CD8-positive, alpha-beta T cell (primary cell): ENCODE measurements at regions of chr9 and their contacts with region 1.

Region 1: DNA sequence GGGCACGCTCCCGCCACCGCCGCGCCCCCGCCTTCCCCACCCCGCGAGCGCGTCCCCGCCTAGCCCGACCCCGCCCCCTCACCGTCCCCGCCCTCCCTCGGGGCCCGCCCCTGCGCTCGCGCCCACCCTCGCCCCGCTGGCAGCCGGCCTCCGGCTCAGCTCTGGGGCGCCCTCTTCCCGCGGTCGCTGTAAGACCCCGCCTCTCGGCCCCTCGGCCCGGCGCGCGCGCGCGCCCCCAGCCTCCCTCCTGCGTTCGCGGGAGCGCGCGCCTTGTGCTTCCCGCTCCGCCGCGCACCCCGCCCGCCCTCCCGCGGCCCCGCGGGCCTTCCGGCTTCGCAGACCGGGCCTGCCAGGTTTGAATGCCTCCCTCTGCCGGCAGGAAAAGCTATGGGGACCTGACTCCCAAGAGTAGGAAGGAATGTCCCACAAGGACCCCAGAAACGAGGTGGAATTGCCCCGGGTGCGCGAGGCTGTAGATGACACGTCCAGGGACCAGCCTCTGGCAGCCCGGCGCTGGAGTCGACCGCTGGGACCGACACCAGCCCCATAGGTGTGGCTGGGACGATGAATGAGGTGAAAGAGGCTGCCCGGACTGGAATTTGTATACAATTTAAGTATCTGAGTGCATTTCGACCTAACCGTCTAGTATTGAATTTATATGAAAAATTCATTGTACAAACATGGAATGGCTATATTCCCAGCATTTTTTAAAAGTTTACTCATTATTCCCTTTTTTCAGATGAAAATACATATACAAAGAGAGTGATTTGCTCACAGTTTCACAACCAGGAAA is 416 bp upstream of the PTBP3 start:
- DNase-seq: peak; percentile 89 to 98 (median 94)
- ATAC-seq: peak; percentile 83
- H3K4me3 ChIP-seq: peak overlapping the region; percentile 87 to 99
- H3K4me3 Mint-ChIP-seq: peak overlapping the region; percentile 79
- H3K27ac ChIP-seq: peak overlapping the region; percentile 88 to 93
- H3K27ac Mint-ChIP-seq: peak overlapping the region; percentile 92
- H3K4me1 ChIP-seq: peaks cover 30% of the 10 kb centered on the region
- H3K4me1 Mint-ChIP-seq: peaks cover 38% of the 10 kb centered on the region
- H3K27me3 ChIP-seq: no peaks in the 10 kb centered on the region
- H3K27me3 Mint-ChIP-seq: no peaks in the 10 kb centered on the region
- CTCF ChIP-seq: peak; percentile 20

Region 2: GRCh38 chr9:111661150-111661801 is 672.6 kb before region 1 on chr9 and contains the start of gene GNG10:
- CTCF ChIA-PET with region 1: interaction called, 4 read pairs
- POLR2A ChIA-PET with region 1: no interaction called
- intact Hi-C with region 1: loop called in 1 of 2 experiments (anchors 2 kb)
- DNase-seq: peak; percentile 48 to 82 (median 66)
- ATAC-seq: peak; percentile 95
- H3K4me3 ChIP-seq: peak within 1 kb of the TSS; percentile 70 to 95
- H3K4me3 Mint-ChIP-seq: peak within 1 kb of the TSS; percentile 95
- H3K27ac ChIP-seq: peak within 1 kb of the TSS; percentile 55 to 57
- H3K27ac Mint-ChIP-seq: peak within 1 kb of the TSS; percentile 92
- H3K4me1 ChIP-seq: peaks cover 24% of the 10 kb centered on the region
- H3K4me1 Mint-ChIP-seq: peaks cover 40% of the 10 kb centered on the region
- H3K27me3 ChIP-seq: no peaks in the 10 kb centered on the region
- H3K27me3 Mint-ChIP-seq: no peaks in the 10 kb centered on the region
- CTCF ChIP-seq: no peak
- total RNA-seq, gene GNG10: 1.6 to 2.6 TPM

Region 3: DNA sequence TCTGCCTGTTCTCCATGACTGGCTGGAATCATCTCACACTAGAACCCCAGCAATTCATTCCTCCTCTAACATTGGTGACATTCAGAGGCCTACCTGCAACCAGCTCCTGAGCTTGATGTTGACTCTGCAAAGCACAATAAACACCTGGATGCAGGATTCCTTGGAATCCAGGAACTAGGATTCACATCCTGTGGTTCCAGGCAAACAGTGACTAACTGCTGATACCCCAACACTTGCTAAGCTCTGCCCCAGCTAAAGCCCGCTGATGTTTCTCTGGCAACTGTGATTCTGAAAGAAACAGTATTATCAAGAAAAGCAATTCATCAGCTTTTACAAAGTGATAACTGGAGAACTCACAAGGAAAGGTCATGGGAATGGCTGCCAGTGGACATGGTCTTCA is 187.9 kb before region 1 on chr9:
- CTCF ChIA-PET with region 1: no interaction called
- POLR2A ChIA-PET with region 1: no interaction called
- intact Hi-C with region 1: no loop called
- DNase-seq: no peak
- ATAC-seq: no peak
- H3K4me3 ChIP-seq: no peak overlapping the region
- H3K4me3 Mint-ChIP-seq: no peak overlapping the region
- H3K27ac ChIP-seq: no peak overlapping the region
- H3K27ac Mint-ChIP-seq: no peak overlapping the region
- H3K4me1 ChIP-seq: no peaks in the 10 kb centered on the region
- H3K4me1 Mint-ChIP-seq: no peaks in the 10 kb centered on the region
- H3K27me3 ChIP-seq: no peaks in the 10 kb centered on the region
- H3K27me3 Mint-ChIP-seq: no peaks in the 10 kb centered on the region
- CTCF ChIP-seq: no peak

Region 4: GRCh38 chr9:112174218-112174964 is 159.4 kb before region 1 on chr9:
- CTCF ChIA-PET with region 1: interaction called, 3 read pairs
- POLR2A ChIA-PET with region 1: interaction called, 15 read pairs
- intact Hi-C with region 1: loop called (anchors 1 to 2 kb)
- DNase-seq: peak; percentile 45 to 87 (median 74)
- ATAC-seq: peak; percentile 70
- H3K4me3 ChIP-seq: peak overlapping the region; percentile 43 to 73
- H3K4me3 Mint-ChIP-seq: peak overlapping the region; percentile 91
- H3K27ac ChIP-seq: peak overlapping the region; percentile 35 to 56
- H3K27ac Mint-ChIP-seq: peak overlapping the region; percentile 87
- H3K4me1 ChIP-seq: peaks cover 46% of the 10 kb centered on the region
- H3K4me1 Mint-ChIP-seq: peaks cover 73% of the 10 kb centered on the region
- H3K27me3 ChIP-seq: no peaks in the 10 kb centered on the region
- H3K27me3 Mint-ChIP-seq: no peaks in the 10 kb centered on the region
- CTCF ChIP-seq: no peak

Region 5: GRCh38 chr9:112299514-112299913 is 34.3 kb before region 1 on chr9:
- CTCF ChIA-PET with region 1: no interaction called
- POLR2A ChIA-PET with region 1: no interaction called
- intact Hi-C with region 1: loop called in 1 of 2 experiments (anchors 5 kb)
- DNase-seq: no peak
- ATAC-seq: no peak
- H3K4me3 ChIP-seq: no peak overlapping the region
- H3K4me3 Mint-ChIP-seq: no peak overlapping the region
- H3K27ac ChIP-seq: no peak overlapping the region
- H3K27ac Mint-ChIP-seq: peak overlapping the region; percentile 27
- H3K4me1 ChIP-seq: peaks cover 7% of the 10 kb centered on the region
- H3K4me1 Mint-ChIP-seq: peaks cover 58% of the 10 kb centered on the region
- H3K27me3 ChIP-seq: no peaks in the 10 kb centered on the region
- H3K27me3 Mint-ChIP-seq: no peaks in the 10 kb centered on the region
- CTCF ChIP-seq: no peak

Region 6: GRCh38 chr9:112379177-112380101 is 45.6 kb after region 1 on chr9:
- CTCF ChIA-PET with region 1: interaction called, 3 read pairs
- POLR2A ChIA-PET with region 1: interaction called, 10 read pairs
- intact Hi-C with region 1: loop called (anchors 1 kb)
- DNase-seq: peak; percentile 93 to 99 (median 97)
- ATAC-seq: peak; percentile 95
- H3K4me3 ChIP-seq: peak overlapping the region; percentile 81 to 96
- H3K4me3 Mint-ChIP-seq: peak overlapping the region; percentile 99
- H3K27ac ChIP-seq: peak overlapping the region; percentile 77 to 92
- H3K27ac Mint-ChIP-seq: peak overlapping the region; percentile 96
- H3K4me1 ChIP-seq: peaks cover 27% of the 10 kb centered on the region
- H3K4me1 Mint-ChIP-seq: peaks cover 54% of the 10 kb centered on the region
- H3K27me3 ChIP-seq: no peaks in the 10 kb centered on the region
- H3K27me3 Mint-ChIP-seq: no peaks in the 10 kb centered on the region
- CTCF ChIP-seq: no peak

Region 7: DNA sequence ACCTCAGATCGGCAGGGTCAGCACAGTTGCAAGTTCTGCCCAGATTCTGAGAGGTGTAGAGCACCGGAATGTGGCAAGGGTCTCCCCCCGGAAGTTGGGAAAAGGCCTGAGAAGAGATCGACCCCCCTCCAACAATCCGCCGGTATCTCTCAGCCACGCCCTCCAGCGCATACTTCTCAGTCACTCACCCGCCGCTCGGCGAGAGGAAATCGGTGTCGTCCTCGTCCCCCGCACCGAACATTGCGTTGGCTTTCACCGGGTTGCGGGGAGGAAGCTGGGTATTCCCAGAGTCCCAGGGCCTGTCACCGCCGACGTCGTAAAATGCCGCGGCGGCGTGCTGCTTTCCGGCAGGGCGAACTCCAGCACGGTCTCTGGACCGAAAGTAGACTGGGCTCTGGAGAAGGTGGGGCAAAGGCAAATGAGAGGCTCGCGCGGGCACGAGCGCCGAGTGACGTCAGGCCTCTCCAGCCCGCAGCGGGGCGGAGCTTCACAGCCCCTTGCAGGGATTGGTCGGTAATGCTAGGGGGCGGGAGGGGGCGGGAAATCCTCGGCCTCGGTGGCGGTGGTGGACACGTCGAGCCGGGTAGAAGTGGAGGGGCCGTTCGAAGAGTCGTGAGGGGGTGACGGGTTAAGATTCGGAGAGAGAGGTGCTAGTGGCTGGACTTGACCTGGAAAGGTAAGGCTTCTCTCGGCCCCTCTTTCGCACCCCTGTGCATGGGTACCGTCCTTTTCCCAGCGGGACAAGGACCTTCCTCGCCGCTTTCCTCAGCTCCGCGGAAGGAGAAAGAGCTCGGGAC is 887.4 kb after region 1 on chr9 and contains the starts of genes FKBP15 and SLC31A1:
- CTCF ChIA-PET with region 1: no interaction called
- POLR2A ChIA-PET with region 1: no interaction called
- intact Hi-C with region 1: loop called in 1 of 2 experiments (anchors 5 kb)
- DNase-seq: peak; percentile 91 to 99 (median 95)
- ATAC-seq: peak; percentile 99
- H3K4me3 ChIP-seq: peak within 1 kb of the TSS; percentile 84 to 94
- H3K4me3 Mint-ChIP-seq: peak within 1 kb of the TSS; percentile 95
- H3K27ac ChIP-seq: peak within 1 kb of the TSS; percentile 71 to 90
- H3K27ac Mint-ChIP-seq: peak within 1 kb of the TSS; percentile 94
- H3K4me1 ChIP-seq: peaks cover 22% of the 10 kb centered on the region
- H3K4me1 Mint-ChIP-seq: peaks cover 57% of the 10 kb centered on the region
- H3K27me3 ChIP-seq: no peaks in the 10 kb centered on the region
- H3K27me3 Mint-ChIP-seq: no peaks in the 10 kb centered on the region
- CTCF ChIP-seq: no peak
- total RNA-seq, gene FKBP15: 8.7 to 8.9 TPM
- total RNA-seq, gene SLC31A1: 8.7 to 9.6 TPM